ENCODE measurements at regions of chr1 and their contacts with region 1.

Region 1: GRCh38 chr1:153598309-153599172 is 14.4 kb downstream of the S100A16 start:
- DNase-seq: peak; percentile 57
- ATAC-seq: peak; percentile 92
- H3K4me3 Mint-ChIP-seq: peak overlapping the region; percentile 73
- H3K27ac Mint-ChIP-seq: peak overlapping the region; percentile 96
- H3K4me1 Mint-ChIP-seq: peaks cover 48% of the 10 kb centered on the region
- H3K27me3 Mint-ChIP-seq: no peaks in the 10 kb centered on the region
- CTCF ChIP-seq: no peak

Region 2: GRCh38 chr1:153608742-153609584 is 10.4 kb after region 1 on chr1:
- CTCF ChIA-PET with region 1: interaction called, 4 read pairs
- POLR2A ChIA-PET with region 1: interaction called, 10 read pairs
- intact Hi-C with region 1: no loop called
- DNase-seq: no peak
- ATAC-seq: no peak
- H3K4me3 Mint-ChIP-seq: no peak overlapping the region
- H3K27ac Mint-ChIP-seq: no peak overlapping the region
- H3K4me1 Mint-ChIP-seq: peaks cover 27% of the 10 kb centered on the region
- H3K27me3 Mint-ChIP-seq: no peaks in the 10 kb centered on the region
- CTCF ChIP-seq: no peak

Region 3: GRCh38 chr1:153626922-153627796 is 28.6 kb after region 1 on chr1 and contains the start of gene S100A13:
- CTCF ChIA-PET with region 1: interaction called, 3 read pairs
- POLR2A ChIA-PET with region 1: interaction called, 27 read pairs
- intact Hi-C with region 1: no loop called
- DNase-seq: no peak
- ATAC-seq: peak; percentile 56
- H3K4me3 Mint-ChIP-seq: peak within 1 kb of the TSS; percentile 60
- H3K27ac Mint-ChIP-seq: no peak within 1 kb of the TSS
- H3K4me1 Mint-ChIP-seq: peaks cover 32% of the 10 kb centered on the region
- H3K27me3 Mint-ChIP-seq: no peaks in the 10 kb centered on the region
- CTCF ChIP-seq: no peak
- total RNA-seq, gene S100A13: 16.2 and 17.6 TPM in 2 replicates

Region 4: DNA sequence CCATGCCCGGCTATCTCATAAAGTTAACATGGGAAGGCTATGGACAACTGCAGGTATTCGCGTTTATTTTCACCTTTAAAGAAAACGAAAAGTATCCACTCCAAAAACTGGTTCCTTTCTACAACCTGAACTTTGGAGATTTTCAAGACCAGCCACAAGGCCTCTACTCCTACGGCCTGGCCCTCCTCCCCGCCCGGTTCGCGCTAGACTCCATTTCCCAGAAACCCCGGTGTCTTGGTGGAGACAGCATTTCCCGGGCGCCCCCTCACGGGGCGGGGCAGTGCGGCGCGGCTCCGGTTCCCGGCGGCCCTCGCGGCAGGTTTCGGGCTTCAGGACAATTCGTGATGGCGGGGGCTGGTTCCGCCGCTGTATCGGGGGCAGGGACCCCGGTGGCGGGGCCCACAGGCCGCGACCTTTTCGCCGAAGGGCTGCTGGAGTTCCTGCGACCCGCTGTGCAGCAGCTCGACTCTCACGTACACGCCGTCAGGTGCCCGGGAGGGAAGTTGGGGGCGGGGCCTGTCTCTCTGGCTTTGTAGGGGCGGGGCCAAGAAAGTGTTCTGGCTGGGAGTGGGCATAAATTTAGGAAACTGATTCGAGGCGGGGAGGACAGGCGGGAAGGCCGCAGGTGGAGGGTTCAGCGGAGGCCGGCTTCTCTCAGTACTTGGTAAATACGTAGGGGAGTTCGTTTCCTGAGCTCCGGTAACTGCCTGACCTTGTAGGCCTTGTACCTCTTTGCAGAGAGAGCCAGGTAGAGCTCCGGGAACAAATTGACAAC is 60.0 kb after region 1 on chr1 and contains the start of gene SNAPIN:
- CTCF ChIA-PET with region 1: no interaction called
- POLR2A ChIA-PET with region 1: interaction called, 10 read pairs
- intact Hi-C with region 1: loop called (anchors 2 kb)
- DNase-seq: peak; percentile 94
- ATAC-seq: peak; percentile 99
- H3K4me3 Mint-ChIP-seq: peak within 1 kb of the TSS; percentile 96
- H3K27ac Mint-ChIP-seq: peak within 1 kb of the TSS; percentile 91
- H3K4me1 Mint-ChIP-seq: peaks cover 14% of the 10 kb centered on the region
- H3K27me3 Mint-ChIP-seq: no peaks in the 10 kb centered on the region
- CTCF ChIP-seq: no peak
- total RNA-seq, gene SNAPIN: 50.4 and 51.5 TPM in 2 replicates

Measured in activated B cell treated with CpG ODN at 0.5 μM for 24 hours (primary cell).